Motor neuron (in vitro differentiated cells): ENCODE measurements at regions of chr2 and their contacts with region 1.

Region 1: DNA sequence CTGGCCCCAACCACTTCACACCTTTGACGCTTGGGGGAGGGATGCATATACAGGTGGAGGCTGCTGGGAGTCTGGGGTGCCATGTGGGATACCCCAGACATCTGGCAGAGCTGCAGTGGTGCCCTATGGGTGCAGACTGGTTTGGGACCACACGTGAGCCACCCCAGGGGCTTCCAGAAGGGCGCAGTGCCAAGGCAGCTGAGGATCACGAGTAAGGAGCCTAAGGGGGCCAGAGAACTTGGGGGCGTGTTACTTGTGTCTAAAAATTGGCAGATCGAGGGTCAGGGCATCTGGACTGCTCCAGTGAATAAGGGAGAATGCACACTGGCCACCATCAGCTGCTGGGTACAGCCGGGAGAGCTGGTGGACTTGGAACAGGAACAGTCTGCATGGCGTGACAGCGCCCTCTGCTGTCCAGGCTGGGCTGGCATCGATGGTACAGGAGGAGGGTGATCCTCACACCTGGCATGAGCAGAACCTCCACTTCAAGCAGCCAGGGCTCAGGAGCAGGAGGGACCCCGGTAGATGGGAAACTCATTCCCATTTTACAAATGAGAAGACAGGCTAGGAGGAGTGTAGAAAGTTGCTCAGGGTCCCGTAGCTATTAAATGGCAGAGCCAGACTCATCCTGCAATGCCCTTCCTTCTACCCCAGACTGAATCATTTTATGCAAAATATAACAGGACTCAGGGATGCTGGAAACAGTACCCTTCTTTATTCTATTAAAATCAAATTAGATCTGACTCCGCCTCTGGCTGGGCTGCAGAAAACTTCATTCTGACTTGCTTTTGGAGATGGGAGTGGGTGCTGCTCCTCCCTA is 60.4 kb downstream of the ATOH8 start:
- ATAC-seq: peak; percentile 98 to 100 (median 100)
- H3K4me3 ChIP-seq: no peak overlapping the region
- H3K27ac ChIP-seq: no peak overlapping the region
- H3K4me1 ChIP-seq: no peaks in the 10 kb centered on the region

Region 2: GRCh38 chr2:84697895-84698294 is 1116.3 kb before region 1 on chr2:
- in situ Hi-C with region 1: no loop called
- ATAC-seq: peak in 1 of 8 experiments; percentile 11
- H3K4me3 ChIP-seq: no peak overlapping the region
- H3K27ac ChIP-seq: no peak overlapping the region
- H3K4me1 ChIP-seq: no peaks in the 10 kb centered on the region

Region 3: DNA sequence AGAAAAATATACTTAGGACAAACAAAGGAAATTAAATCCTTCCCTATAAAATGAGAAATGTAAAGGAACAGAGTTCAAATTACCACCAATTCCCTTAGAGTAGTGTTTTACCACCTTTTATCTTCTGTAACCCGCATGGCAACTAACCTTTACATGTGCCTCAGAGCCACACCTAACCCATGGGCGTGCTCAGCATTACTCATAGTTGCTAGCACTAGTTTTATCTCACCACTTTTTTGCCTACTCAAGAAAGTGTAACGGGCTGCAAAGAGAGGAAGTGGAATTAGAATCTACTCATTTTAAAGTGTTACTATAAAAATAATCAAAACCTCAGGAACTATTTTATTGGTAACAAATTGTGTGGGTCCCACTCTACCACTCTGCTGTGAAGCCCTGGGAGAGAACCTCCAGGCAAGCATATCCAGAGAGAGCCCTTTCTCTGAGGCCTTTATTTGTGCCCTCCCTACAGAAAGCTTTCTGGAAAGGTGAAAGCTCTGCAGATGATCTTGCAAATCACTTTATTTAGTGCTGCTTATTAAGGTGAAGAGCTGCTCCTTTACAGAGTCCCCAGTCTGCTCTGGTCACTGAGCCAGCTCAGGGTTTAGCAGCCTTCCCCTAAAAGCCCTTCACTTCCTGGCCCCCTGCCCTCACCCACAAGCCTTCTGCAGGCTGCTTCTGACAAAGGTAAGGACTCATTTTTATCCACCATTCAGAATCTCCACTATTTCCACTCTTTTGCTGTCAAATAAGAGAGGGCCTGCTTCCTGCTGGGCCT is 1032.1 kb before region 1 on chr2:
- in situ Hi-C with region 1: no loop called
- ATAC-seq: peak in 2 of 8 experiments; percentile 92 to 99
- H3K4me3 ChIP-seq: no peak overlapping the region
- H3K27ac ChIP-seq: no peak overlapping the region
- H3K4me1 ChIP-seq: no peaks in the 10 kb centered on the region

Region 4: DNA sequence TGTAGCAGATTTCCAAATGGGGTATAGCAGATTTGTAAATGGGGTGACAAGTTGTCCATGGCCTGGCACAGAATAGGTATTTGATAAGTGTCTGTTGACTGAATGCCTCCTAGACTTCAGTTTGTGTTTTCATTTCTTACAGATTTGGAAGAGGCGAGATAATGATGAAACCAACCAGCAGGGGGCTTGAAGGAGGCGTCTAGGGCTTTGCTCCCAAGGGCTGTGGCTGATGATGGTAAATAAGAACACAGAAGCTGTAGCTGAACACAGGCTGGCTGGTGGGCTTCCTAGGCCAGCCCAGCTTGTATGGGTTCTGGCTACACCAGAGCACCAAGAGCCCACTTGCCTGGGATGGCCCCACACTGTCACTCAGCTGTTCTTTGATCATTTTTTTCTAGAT is 165.6 kb before region 1 on chr2:
- in situ Hi-C with region 1: loop called in 1 of 9 experiments (anchors 25 kb)
- ATAC-seq: peak in 3 of 8 experiments; percentile 77 to 82 (median 79)
- H3K4me3 ChIP-seq: no peak overlapping the region
- H3K27ac ChIP-seq: no peak overlapping the region
- H3K4me1 ChIP-seq: no peaks in the 10 kb centered on the region

Region 5: DNA sequence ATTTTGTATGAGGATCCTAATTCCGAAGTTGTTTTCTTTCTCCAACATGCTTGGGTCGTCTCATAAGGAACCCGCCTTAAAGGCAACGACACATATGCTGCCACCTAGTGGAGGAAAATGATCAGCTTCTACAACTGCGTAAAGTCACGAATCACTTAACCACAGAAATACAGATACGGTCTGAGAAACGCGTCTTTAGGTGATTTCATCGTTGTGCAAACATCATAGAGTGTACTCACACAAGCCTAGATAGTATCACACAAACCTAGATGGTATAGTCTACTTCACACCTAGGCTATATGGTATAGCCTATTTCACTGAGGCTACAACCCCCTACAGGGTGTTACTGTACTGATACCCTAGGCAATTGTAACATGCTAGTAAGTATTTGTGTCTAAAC is 106.9 kb before region 1 on chr2:
- in situ Hi-C with region 1: loop called in 1 of 9 experiments (anchors 25 kb)
- ATAC-seq: peak; percentile 62 to 97 (median 78)
- H3K4me3 ChIP-seq: no peak overlapping the region
- H3K27ac ChIP-seq: no peak overlapping the region
- H3K4me1 ChIP-seq: no peaks in the 10 kb centered on the region

Region 6: DNA sequence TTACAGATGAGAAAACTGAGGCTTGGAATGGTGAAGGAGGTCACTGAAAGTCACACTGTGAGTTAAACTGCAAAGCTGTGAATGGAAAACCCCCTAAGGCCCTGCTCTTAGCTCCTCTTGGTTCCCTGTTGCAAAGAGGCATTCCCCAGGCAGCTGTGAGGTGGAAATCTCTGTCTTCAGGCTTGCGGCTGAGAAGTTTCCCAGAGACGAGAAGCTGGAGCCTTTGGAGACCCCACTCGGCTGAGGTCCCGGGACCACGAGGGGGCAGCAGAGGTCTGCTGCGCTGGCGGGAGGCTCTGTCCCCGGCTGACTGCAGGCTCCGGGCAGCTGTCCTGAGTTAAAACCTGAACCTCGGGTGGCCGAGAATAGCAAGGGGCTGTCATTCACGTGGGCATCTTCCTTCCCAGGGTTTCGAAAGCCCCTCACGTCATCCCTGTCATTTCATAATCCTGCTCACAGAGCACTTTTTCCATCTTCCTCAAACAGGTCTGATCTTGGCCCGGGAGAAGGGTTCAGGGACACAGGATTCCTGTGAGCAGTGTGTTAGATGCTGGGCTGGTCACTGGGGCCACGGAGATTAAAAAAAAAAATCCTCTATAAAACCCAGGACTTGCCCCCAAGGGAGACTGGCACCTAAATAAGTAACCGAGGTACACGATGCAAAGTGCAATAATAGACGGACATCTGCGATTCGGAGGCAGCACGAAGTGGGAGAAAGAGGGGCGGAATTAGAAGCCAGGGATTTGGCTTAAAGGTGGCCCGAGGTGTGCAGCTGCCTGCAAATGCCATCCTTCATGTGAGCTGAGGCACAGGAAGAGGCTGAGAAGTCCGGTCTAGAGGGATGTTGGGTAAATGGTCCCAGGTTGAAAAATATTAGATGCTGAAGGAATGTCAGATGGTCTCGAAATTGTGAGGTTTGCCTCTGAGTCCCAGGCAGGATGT is 85.0 kb before region 1 on chr2:
- in situ Hi-C with region 1: loop called in 5 of 9 experiments (anchors 5 to 25 kb)
- ATAC-seq: peak; percentile 96 to 100 (median 100)
- H3K4me3 ChIP-seq: no peak overlapping the region
- H3K27ac ChIP-seq: no peak overlapping the region
- H3K4me1 ChIP-seq: peaks cover 0 to 10% of the 10 kb centered on the region in 2 donors

Region 7: DNA sequence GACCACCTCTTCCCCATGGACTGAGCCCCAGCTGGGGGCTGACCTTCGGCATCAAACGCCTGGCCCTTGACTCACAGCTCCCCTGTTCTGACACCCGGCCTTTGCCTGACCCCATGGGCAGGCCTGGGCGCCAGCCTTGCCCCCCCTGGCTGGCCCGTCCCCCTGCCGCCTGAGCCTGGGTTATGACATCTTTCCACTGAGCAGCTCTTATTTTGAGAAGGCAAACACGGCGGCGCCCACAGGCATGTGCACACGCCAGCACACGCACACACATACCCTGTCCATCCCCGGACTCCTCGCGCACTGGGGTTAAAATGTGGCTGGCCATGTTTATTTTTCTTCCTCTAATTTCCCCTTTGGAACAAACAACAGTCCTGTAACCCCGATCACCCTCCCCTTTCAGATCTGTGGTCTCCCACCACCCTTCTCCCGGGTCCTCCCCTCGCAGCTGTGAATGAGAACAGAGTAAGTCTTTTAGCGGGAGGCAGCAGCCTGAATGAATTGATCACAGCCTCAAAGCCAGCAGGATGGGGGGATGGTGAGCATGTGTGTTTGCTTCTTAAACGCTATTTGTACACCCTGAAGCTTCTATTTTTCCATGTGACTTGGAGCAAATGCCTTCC is 72.2 kb before region 1 on chr2:
- in situ Hi-C with region 1: loop called in 1 of 9 experiments (anchors 5 kb)
- ATAC-seq: peak; percentile 25 to 83 (median 78)
- H3K4me3 ChIP-seq: peak overlapping the region in 3 of 5 donors; percentile 0 to 1 (median 0)
- H3K27ac ChIP-seq: peak overlapping the region; percentile 68 to 86
- H3K4me1 ChIP-seq: peaks cover 31 to 43% of the 10 kb centered on the region in 2 donors

Region 8: GRCh38 chr2:85750587-85751575 is 63.3 kb before region 1 on chr2:
- in situ Hi-C with region 1: loop called in 1 of 9 experiments (anchors 10 kb)
- ATAC-seq: peak in 4 of 8 experiments; percentile 8 to 57 (median 45)
- H3K4me3 ChIP-seq: no peak overlapping the region
- H3K27ac ChIP-seq: no peak overlapping the region
- H3K4me1 ChIP-seq: peaks cover 4 to 8% of the 10 kb centered on the region in 2 donors